Endothelial cell of umbilical vein (primary cell): ENCODE measurements at regions of chr12 and their contacts with region 1.

Region 1: DNA sequence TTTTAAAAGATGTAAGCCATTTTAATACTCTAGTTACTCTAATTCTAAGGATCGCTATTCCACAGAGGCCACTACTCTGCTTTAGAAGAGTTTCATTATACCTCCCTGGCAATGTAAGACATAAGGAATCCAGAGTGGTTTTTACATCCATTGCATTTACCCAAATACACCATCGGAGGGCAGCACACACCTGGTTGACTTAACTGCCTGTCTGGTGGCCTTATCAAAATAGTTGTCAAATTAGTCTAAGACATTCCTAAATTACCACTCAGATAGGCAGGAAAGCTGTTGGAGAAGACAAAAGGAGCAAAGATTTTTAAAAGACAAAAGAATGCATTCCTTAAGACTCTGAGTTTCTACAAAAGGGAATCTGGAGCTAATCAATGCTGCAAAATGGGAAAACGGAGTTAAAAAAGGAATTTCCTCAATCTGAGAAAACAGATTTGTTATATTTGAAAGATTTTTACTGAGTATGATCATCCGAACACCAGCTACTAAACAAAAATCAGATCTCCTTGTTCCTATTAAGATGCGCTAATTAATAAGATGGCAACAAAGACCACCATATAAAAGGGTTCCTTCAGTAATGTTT is 33.8 kb upstream of the FGD4 start:
- DNase-seq: peak; percentile 85
- H3K4me3 ChIP-seq: no peak overlapping the region
- H3K27ac ChIP-seq: no peak overlapping the region
- H3K4me1 ChIP-seq: peaks cover 2% of the 10 kb centered on the region
- H3K27me3 ChIP-seq: no peaks in the 10 kb centered on the region
- CTCF ChIP-seq: peak; percentile 66 to 70
- POLR2A ChIP-seq: no peak

Region 2: DNA sequence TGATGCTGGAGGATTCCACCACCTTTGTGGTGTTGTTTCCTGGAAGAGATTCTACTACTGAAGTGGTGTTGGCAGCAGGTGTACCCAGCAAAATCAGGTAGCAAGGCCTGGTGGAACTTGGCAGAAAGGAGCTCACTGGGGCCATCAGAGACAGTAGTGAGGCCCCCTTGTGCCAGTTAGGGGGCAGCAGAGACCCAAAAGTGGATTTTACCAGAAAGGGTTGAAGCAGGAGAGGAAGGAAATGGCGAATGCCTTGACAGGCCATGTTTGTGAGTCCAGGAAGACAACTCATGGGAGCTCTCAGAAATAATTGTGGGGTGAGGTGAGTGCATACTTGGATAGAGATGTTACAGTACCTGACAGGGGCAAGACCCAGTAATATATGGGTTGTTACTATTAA is 103.9 kb before region 1 on chr12:
- CTCF ChIA-PET with region 1: no interaction called
- POLR2A ChIA-PET with region 1: no interaction called
- dilution Hi-C with region 1: no loop called
- intact Hi-C with region 1: no loop called
- DNase-seq: no peak
- H3K4me3 ChIP-seq: no peak overlapping the region
- H3K27ac ChIP-seq: no peak overlapping the region
- H3K4me1 ChIP-seq: peaks cover 13% of the 10 kb centered on the region
- H3K27me3 ChIP-seq: no peaks in the 10 kb centered on the region
- CTCF ChIP-seq: no peak
- POLR2A ChIP-seq: no peak

Region 3: DNA sequence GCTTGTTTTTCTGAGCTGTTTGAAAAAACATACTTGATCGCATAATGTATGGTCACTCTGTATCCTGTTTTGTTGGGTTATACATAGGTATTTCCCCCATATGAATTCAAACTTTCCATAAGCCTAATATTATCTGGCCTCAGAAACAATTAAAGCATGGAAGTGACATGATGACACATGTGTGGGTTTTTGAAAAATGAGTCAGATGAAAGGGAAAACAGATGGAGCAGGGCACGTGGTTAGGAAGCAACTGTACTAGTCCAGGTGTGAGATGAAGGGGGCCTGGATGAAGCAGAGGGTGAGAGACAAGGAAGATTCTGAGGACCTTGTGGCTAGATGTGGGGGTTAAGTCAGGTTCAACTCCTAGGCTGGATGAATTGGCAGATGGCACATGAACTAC is 220.8 kb after region 1 on chr12:
- CTCF ChIA-PET with region 1: interaction called, 4 read pairs
- POLR2A ChIA-PET with region 1: no interaction called
- dilution Hi-C with region 1: no loop called
- intact Hi-C with region 1: loop called (anchors 1 kb)
- DNase-seq: peak; percentile 96
- H3K4me3 ChIP-seq: no peak overlapping the region
- H3K27ac ChIP-seq: peak overlapping the region; percentile 72
- H3K4me1 ChIP-seq: peaks cover 32% of the 10 kb centered on the region
- H3K27me3 ChIP-seq: no peaks in the 10 kb centered on the region
- CTCF ChIP-seq: no peak
- POLR2A ChIP-seq: peak; percentile 16

Region 4: DNA sequence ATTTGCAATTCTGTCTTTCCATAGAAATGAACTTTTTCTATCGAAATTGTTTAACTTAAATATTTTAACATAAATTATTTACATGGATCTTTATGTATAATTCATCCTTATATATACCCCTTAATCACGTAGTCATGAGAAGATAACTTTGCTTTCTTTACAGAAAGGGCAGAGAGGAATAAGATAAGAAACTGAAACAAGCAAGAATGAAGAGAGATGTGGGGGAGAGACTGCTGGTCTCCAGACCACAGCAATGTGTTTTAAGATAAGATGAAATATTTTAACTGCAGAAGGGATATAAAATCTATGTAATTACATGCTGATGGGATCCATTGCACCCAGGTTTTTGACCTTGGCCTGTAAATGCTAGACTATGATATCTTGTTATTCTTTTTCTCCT is 278.9 kb after region 1 on chr12:
- CTCF ChIA-PET with region 1: no interaction called
- POLR2A ChIA-PET with region 1: no interaction called
- dilution Hi-C with region 1: no loop called
- intact Hi-C with region 1: no loop called
- DNase-seq: no peak
- H3K4me3 ChIP-seq: no peak overlapping the region
- H3K27ac ChIP-seq: no peak overlapping the region
- H3K4me1 ChIP-seq: no peaks in the 10 kb centered on the region
- H3K27me3 ChIP-seq: no peaks in the 10 kb centered on the region
- CTCF ChIP-seq: no peak
- POLR2A ChIP-seq: no peak

Region 5: DNA sequence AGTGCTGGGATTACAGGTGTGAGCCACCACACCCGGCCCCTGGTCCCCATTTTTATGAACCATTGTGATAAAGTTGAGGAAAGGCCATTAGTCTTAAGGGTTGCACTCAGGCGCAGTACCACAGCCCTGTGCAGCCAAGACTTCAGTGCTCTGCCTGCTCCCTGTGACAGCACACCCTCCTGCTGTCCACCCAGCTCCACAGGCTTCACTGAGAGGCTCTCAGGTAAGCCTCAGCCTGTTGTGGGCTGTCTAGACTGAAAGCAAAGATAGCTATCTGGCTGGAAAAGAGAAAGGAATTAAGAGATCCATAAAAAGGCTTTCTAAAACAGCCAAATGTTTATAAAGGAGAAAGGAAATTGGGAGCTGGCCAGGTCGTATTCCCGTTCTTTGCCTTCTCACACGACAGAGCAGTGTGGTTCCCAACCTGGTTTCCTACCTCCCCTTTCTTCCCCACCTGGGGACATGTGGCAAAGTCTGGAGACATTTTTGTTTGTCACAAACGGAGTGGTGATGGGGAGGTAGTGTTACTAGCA is 294.4 kb after region 1 on chr12:
- CTCF ChIA-PET with region 1: interaction called, 42 read pairs
- POLR2A ChIA-PET with region 1: no interaction called
- dilution Hi-C with region 1: no loop called
- intact Hi-C with region 1: loop called (anchors 1 kb)
- DNase-seq: peak; percentile 11
- H3K4me3 ChIP-seq: no peak overlapping the region
- H3K27ac ChIP-seq: no peak overlapping the region
- H3K4me1 ChIP-seq: no peaks in the 10 kb centered on the region
- H3K27me3 ChIP-seq: no peaks in the 10 kb centered on the region
- CTCF ChIP-seq: no peak
- POLR2A ChIP-seq: no peak

Region 6: DNA sequence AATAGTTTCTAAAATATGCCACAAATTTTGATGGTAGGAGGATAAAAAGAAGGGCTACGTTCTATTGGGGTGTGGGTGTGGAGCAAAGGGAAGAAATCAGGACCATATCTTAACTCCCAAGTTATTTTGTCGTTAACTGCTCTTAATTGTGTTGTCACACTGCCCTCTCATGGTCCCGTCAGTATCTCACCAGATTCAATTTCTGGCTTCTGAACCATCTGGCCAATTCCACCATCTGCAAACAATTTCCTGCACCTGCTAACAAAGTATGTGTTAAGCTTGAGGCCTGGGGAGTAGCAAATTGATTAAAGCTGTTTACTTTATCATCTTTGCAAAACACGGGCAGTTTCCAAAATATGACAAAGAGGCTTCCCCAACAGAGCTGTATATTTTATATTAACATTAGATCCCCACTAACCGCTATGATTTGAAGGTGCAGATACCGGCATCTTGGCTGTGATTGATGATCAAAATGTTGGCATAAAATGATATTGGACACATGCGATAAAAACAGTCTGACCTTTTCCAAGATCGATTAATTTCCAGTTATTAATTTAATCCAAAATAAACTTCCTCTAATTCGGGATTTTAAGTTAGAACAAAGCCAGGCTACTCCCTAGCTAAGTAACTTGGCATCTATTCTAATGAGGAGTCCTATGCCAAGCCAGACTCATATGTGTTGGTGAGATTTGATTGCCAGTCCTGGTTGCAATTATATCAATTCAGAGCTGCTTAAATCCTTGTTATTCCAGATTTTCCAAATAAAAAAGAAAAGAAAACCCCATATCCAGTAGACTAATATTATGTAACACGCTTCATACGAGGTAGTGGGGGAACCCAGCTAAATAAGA is 306.6 kb after region 1 on chr12:
- CTCF ChIA-PET with region 1: interaction called, 95 read pairs
- POLR2A ChIA-PET with region 1: no interaction called
- dilution Hi-C with region 1: no loop called
- intact Hi-C with region 1: loop called (anchors 1 kb)
- DNase-seq: peak; percentile 85
- H3K4me3 ChIP-seq: no peak overlapping the region
- H3K27ac ChIP-seq: no peak overlapping the region
- H3K4me1 ChIP-seq: peaks cover 6% of the 10 kb centered on the region
- H3K27me3 ChIP-seq: no peaks in the 10 kb centered on the region
- CTCF ChIP-seq: peak; percentile 45 to 65
- POLR2A ChIP-seq: no peak

Region 7: DNA sequence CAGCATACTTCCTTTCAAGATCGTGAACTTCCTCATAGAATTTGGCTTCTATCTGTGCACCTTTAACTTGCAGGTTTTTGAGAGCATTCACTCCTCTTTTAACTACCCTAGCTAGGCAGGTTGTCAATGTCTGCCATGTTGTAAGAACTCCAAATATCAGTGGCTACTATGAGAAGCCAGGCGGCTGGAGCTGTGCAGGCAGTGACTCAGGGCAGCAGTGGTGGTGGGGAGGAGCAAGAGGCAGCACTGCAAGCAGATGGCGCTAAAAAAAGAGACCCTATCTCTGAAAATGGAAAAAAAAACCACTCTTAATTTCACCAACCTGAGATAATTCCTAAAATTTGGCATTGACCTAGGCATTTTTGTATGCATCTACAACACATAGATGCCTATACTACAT is 361.7 kb after region 1 on chr12:
- CTCF ChIA-PET with region 1: no interaction called
- POLR2A ChIA-PET with region 1: no interaction called
- dilution Hi-C with region 1: no loop called
- intact Hi-C with region 1: loop called (anchors 5 kb)
- DNase-seq: no peak
- H3K4me3 ChIP-seq: no peak overlapping the region
- H3K27ac ChIP-seq: no peak overlapping the region
- H3K4me1 ChIP-seq: no peaks in the 10 kb centered on the region
- H3K27me3 ChIP-seq: no peaks in the 10 kb centered on the region
- CTCF ChIP-seq: no peak
- POLR2A ChIP-seq: no peak

Region 8: GRCh38 chr12:34022079-34022830 is 1656.7 kb after region 1 on chr12 and contains the start of gene ALG10:
- CTCF ChIA-PET with region 1: no interaction called
- POLR2A ChIA-PET with region 1: no interaction called
- dilution Hi-C with region 1: no loop called
- intact Hi-C with region 1: loop called (anchors 2 kb)
- DNase-seq: peak; percentile 96
- H3K4me3 ChIP-seq: peak within 1 kb of the TSS; percentile 40 to 83 (median 72)
- H3K27ac ChIP-seq: peak within 1 kb of the TSS; percentile 87
- H3K4me1 ChIP-seq: peaks cover 7% of the 10 kb centered on the region
- H3K27me3 ChIP-seq: peaks cover 0 to 3% of the 10 kb centered on the region in 2 experiments
- CTCF ChIP-seq: peak; percentile 54 to 63
- POLR2A ChIP-seq: peak; percentile 80
- total RNA-seq, gene ALG10: 13.0 and 13.2 TPM in 2 replicates